Heart right ventricle (tissue), 16 donors: ENCODE measurements at regions of chr2 and their contacts with region 1.

Region 1: GRCh38 chr2:159720676-159721075 is 8.4 kb downstream of the MARCHF7 start:
- DNase-seq: no peak
- ATAC-seq: no peak
- H3K4me3 ChIP-seq: no peak overlapping the region
- H3K27ac ChIP-seq: no peak overlapping the region
- H3K4me1 ChIP-seq: peaks cover 0 to 90% (median 71%) of the 10 kb centered on the region in 9 donors
- H3K27me3 ChIP-seq: no peaks in the 10 kb centered on the region
- CTCF ChIP-seq: no peak

Region 2: DNA sequence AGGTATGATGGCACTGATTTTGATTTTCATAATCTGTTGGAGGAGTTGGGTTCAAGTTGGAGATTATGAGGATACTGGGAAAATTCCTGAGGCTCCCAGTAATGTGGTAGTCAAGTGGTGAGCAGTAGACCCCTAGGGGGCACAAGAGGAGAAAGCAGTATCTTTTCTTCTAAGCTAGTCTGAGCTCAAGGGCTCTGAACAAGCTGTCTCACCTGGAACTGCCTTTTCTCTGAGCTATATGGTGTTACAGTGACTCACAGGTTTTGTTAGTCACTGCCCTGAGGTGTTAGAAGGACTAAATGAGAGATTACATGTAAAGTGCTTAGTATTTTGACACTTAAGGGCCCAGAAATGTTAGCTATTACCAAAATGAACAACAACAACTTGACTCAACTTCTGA is 35.1 kb after region 1 on chr2:
- intact Hi-C with region 1: loop called in 2 of 10 experiments (anchors 5 kb)
- DNase-seq: no peak
- ATAC-seq: peak in 3 of 8 donors; percentile 31 to 63 (median 43)
- H3K4me3 ChIP-seq: no peak overlapping the region
- H3K27ac ChIP-seq: peak overlapping the region in 5 of 10 donors; percentile 1 to 56 (median 21)
- H3K4me1 ChIP-seq: peaks cover 0 to 65% (median 46%) of the 10 kb centered on the region in 9 donors
- H3K27me3 ChIP-seq: no peaks in the 10 kb centered on the region
- CTCF ChIP-seq: peak in 4 of 9 donors; percentile 9 to 36 (median 23)

Region 3: DNA sequence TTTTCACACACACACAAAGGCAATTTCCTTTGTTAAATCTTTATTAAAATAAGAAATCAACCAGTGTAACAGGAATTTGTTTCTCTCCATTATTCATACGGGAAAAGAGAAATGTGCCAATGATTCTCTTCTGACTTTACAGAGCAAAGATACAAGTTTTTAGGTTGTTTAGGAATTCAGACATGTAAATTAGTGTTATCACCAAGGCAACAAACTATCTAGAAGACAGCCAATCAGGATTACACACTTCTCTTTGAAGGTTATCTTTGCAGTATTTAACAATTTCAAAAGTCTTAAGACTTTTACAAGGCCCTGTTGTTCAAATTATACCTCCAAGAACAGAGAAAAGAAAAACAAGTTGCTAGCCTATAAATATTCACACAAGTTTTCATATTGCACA is 62.9 kb after region 1 on chr2:
- intact Hi-C with region 1: no loop called
- DNase-seq: no peak
- ATAC-seq: no peak
- H3K4me3 ChIP-seq: no peak overlapping the region
- H3K27ac ChIP-seq: no peak overlapping the region
- H3K4me1 ChIP-seq: peaks cover 0 to 42% (median 0%) of the 10 kb centered on the region in 9 donors
- H3K27me3 ChIP-seq: no peaks in the 10 kb centered on the region
- CTCF ChIP-seq: no peak

Region 4: GRCh38 chr2:160157861-160158829 is 437.5 kb after region 1 on chr2:
- intact Hi-C with region 1: no loop called
- DNase-seq: no peak
- ATAC-seq: peak in 4 of 8 donors; percentile 7 to 79 (median 58)
- H3K4me3 ChIP-seq: peak overlapping the region in 2 of 10 donors; percentile 16 to 23
- H3K27ac ChIP-seq: peak overlapping the region in 1 of 10 donors; percentile 17
- H3K4me1 ChIP-seq: peaks cover 0 to 11% (median 5%) of the 10 kb centered on the region in 9 donors
- H3K27me3 ChIP-seq: no peaks in the 10 kb centered on the region
- CTCF ChIP-seq: no peak